HEK293 (cell line): ENCODE measurements at regions of chr1 and their contacts with region 1.

Region 1: DNA sequence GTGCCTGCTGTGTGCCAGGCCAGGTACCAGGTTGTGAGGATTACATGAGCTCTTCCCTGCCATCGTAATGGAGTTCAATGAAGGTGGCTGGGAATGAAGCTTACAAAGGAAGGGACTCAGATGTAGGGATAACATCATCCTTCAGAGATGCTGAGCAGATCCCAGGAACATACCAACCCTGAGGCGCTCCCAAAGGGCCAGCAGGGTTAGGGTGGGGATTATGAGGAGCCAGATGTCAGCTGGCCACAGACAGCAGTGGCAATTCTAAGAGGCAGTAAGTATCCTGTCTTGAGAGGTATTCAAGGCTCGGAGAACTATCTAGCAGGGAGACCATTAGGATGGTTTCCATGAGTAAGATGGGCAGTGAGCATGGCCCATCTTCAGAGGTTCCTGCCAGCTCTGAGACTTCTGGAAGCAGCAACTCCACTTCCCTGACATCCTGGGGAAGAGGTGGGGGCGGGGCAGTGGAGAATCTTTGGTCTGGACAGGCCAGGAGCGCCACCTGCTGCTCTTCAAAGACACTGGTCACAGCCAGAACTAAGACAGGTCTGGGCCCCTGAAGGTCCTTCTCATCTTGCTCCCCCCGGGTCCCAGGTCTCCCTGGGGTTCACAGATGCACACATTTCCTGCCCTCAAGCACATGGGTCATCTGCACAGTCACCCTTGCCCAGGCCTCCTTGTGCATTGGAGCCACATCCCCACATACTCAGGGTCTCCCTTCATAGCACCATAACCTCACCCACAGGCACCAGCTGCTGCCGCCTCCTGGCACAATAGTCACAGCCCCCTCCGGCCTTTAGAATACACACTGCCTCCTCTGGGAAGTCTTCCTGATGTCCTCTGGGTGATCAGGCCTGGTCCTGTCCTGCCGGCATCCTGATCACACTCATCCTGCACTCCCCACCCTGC is 2.7 kb upstream of the SDC3 start:
- H3K4me3 ChIP-seq: no peak overlapping the region
- H3K27ac ChIP-seq: no peak overlapping the region
- H3K4me1 ChIP-seq: peaks cover 8% of the 10 kb centered on the region; the same call in 1 of the 2 replicates
- CTCF ChIP-seq: peak; percentile 93

Region 2: GRCh38 chr1:30718636-30719405 is 192.5 kb before region 1 on chr1:
- CTCF ChIA-PET with region 1: interaction called, 78 read pairs
- POLR2A ChIA-PET with region 1: no interaction called
- H3K4me3 ChIP-seq: peak overlapping the region; percentile 57
- H3K27ac ChIP-seq: peak overlapping the region; percentile 37; the same call in 1 of the 2 replicates
- H3K4me1 ChIP-seq: no peaks in the 10 kb centered on the region
- CTCF ChIP-seq: peak; percentile 96

Region 3: DNA sequence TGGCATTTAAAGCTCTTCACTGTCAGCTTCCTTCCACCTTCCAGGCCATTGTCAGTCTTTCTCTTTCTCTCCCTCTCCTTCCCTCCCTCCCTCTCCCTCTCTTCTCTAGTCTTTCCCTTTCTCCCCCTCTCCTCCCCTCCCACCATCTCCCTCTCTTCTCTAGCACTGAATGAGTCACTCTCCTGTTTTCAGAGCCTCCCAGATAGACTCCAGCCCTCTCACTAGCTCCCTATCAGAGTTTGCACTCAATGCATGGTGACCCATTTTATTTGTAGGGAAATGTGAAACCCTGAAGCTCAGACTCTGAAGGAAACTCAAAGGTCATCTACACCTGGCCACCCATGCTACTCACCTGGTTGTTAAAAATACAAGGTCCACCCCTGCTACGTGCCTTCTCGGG is 183.5 kb before region 1 on chr1:
- CTCF ChIA-PET with region 1: interaction called, 11 read pairs
- POLR2A ChIA-PET with region 1: no interaction called
- H3K4me3 ChIP-seq: no peak overlapping the region
- H3K27ac ChIP-seq: no peak overlapping the region
- H3K4me1 ChIP-seq: no peaks in the 10 kb centered on the region
- CTCF ChIP-seq: no peak

Region 4: GRCh38 chr1:30790850-30791778 is 120.2 kb before region 1 on chr1:
- CTCF ChIA-PET with region 1: interaction called, 434 read pairs
- POLR2A ChIA-PET with region 1: interaction called, 5 read pairs
- H3K4me3 ChIP-seq: no peak overlapping the region
- H3K27ac ChIP-seq: no peak overlapping the region
- H3K4me1 ChIP-seq: no peaks in the 10 kb centered on the region
- CTCF ChIP-seq: no peak

Region 5: GRCh38 chr1:30929135-30929889 is 18.0 kb after region 1 on chr1:
- CTCF ChIA-PET with region 1: interaction called, 24 read pairs
- POLR2A ChIA-PET with region 1: no interaction called
- H3K4me3 ChIP-seq: no peak overlapping the region
- H3K27ac ChIP-seq: no peak overlapping the region
- H3K4me1 ChIP-seq: no peaks in the 10 kb centered on the region
- CTCF ChIP-seq: peak; percentile 79; the same call in 1 of the 2 replicates

Region 6: DNA sequence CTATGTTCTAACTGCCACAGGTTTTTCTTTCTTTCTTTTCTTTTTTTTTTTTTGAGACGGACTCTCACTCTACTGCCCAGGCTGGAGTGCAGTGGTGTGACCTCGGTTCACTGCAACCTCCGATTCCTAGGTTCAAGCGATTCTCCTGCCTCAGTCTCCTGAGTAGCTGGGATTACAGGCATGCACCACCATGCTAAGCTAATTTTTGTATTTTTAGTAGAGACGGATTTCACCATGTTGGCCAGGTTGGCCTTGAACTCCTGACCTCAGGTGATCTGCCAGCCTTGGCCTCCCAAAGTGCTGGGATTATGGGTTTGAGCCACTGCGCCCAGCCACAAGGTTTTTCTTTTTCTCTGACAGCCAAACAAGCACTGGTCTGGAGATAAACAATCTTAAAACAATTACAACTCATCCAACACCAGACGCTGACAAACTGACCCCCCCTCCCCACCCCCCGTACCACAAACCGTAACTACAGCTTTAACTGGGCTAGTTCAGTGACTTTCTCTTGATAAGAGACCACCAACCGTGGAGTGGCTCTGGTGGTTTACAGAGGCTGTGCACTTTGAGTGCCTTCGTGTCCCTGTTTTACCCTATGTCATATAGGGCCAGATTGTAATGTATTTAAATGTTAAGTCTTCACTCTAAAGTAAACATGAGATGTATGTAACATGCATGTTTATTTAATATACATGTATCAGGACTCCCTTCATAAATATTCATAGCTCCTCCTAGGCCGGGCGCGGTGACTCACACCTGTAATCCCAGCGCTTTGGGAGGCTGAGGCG is 173.7 kb after region 1 on chr1:
- CTCF ChIA-PET with region 1: no interaction called
- POLR2A ChIA-PET with region 1: no interaction called
- H3K4me3 ChIP-seq: no peak overlapping the region
- H3K27ac ChIP-seq: no peak overlapping the region
- H3K4me1 ChIP-seq: no peaks in the 10 kb centered on the region
- CTCF ChIP-seq: no peak